HEK293 (cell line): ENCODE measurements at regions of chr17 and their contacts with region 1.

Region 1: GRCh38 chr17:60573201-60574051 is 26.6 kb upstream of the PPM1D start:
- H3K4me3 ChIP-seq: no peak overlapping the region
- H3K27ac ChIP-seq: no peak overlapping the region
- H3K4me1 ChIP-seq: no peaks in the 10 kb centered on the region
- CTCF ChIP-seq: no peak

Region 2: DNA sequence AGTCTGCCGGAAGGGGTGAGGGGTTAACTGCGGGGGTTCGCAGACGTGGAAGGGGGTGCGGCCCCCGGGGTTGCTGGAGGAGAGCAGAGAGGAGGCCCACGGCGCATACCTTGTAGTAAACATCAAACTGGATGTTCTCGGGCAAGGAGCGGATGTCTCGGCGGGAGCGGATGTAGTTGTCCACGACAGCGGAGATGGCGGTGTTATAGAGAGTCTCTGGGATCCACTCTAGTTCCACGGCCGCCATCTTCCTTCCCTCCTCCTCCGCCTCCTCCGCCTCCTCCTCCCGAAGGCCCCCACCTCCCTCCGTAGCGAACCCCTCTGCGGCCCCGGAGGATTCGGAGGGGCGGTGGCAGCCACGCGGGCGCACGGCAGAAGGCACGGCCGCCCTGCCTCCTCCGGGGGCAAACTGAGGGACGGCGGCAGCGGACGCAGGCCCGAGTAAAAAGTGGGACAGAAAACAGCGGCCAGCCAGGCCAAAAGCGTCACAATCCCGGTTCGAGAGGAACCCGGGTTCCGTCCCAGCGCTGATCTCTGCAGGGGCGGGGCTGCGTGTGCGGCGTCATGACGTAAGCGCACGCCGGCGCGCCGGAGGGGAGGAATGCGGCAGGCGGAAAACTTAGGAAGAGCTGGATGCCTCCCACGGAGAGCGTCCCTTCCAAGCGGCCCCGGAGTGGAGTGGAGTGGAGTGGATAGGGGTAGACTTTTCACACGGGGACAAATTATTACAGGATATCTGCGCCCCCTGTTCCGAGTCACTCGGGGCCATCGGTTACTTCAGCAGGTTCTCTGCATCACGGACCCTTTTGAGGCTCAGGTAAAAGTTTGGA is 47.5 kb before region 1 on chr17 and contains the start of gene APPBP2:
- CTCF ChIA-PET with region 1: interaction called, 10 read pairs
- POLR2A ChIA-PET with region 1: interaction called, 5 read pairs
- H3K4me3 ChIP-seq: peak within 1 kb of the TSS; percentile 98
- H3K27ac ChIP-seq: peak within 1 kb of the TSS; percentile 98
- H3K4me1 ChIP-seq: no peaks in the 10 kb centered on the region
- CTCF ChIP-seq: no peak

Region 3: DNA sequence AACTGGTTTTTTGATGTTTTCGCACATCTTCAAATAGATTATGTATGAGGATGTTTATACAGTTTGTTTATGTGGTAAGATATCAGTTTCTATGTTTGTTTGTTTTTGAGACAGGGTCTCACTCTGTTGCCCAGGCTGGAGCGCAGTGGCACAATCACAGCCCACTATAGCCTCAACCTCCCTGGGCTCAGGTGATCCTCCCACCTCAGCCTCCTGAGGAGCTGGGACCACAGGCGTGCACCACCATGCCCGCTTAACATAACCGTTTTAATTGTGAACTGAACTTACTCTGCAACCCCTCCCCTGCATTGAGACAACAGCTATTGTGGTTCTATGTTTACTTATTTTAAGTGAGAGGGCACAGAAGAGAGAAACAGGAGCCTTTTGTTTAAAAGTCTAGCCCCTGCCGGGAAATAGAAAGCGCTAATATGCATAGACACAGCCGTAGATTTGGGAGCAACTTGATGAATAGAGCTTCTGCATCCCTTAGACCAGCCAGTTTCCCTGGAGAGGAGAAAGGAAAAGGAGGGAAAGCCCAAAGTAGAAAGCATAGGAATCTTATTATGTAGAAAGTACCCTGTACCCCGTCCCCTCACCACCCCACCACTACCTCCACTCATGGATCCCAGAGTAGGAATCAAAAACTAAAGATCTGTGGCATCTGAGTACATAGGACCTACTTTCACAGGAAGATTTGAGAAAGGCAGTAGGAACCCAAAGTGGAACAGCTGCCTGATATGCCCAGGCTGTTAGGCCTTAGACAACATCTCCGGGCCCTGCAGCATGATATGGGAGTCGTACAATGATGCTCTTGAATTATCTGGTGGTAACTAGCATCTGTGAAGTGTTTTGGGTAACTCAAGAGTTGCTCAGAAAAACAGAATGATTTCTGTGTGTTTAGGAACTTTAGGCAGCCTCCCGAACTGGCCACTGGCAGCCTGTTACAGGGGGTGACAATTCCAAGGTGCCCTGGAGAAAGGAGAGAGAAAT is 27.7 kb before region 1 on chr17:
- CTCF ChIA-PET with region 1: interaction called, 10 read pairs
- POLR2A ChIA-PET with region 1: interaction called, 3 read pairs
- H3K4me3 ChIP-seq: no peak overlapping the region
- H3K27ac ChIP-seq: no peak overlapping the region
- H3K4me1 ChIP-seq: no peaks in the 10 kb centered on the region
- CTCF ChIP-seq: no peak

Region 4: GRCh38 chr17:60557805-60558204 is 15.6 kb before region 1 on chr17:
- CTCF ChIA-PET with region 1: interaction called, 28 read pairs
- POLR2A ChIA-PET with region 1: no interaction called
- H3K4me3 ChIP-seq: no peak overlapping the region
- H3K27ac ChIP-seq: no peak overlapping the region
- H3K4me1 ChIP-seq: no peaks in the 10 kb centered on the region
- CTCF ChIP-seq: no peak

Region 5: GRCh38 chr17:60594734-60595133 is 21.3 kb after region 1 on chr17:
- CTCF ChIA-PET with region 1: interaction called, 10 read pairs
- POLR2A ChIA-PET with region 1: interaction called, 10 read pairs
- H3K4me3 ChIP-seq: no peak overlapping the region
- H3K27ac ChIP-seq: no peak overlapping the region
- H3K4me1 ChIP-seq: peaks cover 16% of the 10 kb centered on the region
- CTCF ChIP-seq: no peak

Region 6: DNA sequence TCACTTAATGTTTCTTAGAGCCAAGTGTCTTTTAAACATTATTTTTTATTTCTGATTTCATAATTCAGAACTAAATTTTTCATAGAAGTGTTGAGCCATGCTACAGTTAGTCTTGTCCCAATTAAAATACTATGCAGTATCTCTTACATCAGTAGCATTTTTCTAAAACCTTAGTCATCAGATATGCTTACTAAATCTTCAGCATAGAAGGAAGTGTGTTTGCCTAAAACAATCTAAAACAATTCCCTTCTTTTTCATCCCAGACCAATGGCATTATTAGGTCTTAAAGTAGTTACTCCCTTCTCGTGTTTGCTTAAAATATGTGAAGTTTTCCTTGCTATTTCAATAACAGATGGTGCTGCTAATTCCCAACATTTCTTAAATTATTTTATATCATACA is 90.6 kb after region 1 on chr17:
- CTCF ChIA-PET with region 1: no interaction called
- POLR2A ChIA-PET with region 1: no interaction called
- H3K4me3 ChIP-seq: no peak overlapping the region
- H3K27ac ChIP-seq: no peak overlapping the region
- H3K4me1 ChIP-seq: no peaks in the 10 kb centered on the region
- CTCF ChIP-seq: no peak